Activated naive CD8-positive, alpha-beta T cell treated with anti-CD3 and anti-CD28 coated beads, Interleukin-2, amount 10 ng/mL, durations not matched to agents 7 days and 5 days (primary cell): ENCODE measurements at regions of chr11 and their contacts with region 1.

Region 1: GRCh38 chr11:96342961-96343711 is at the start of gene MAML2:
- DNase-seq: peak; percentile 82
- ATAC-seq: peak; percentile 80
- H3K4me3 Mint-ChIP-seq: peak within 1 kb of the TSS; percentile 96
- H3K27ac Mint-ChIP-seq: peak within 1 kb of the TSS; percentile 90
- H3K4me1 Mint-ChIP-seq: peaks cover 24% of the 10 kb centered on the region
- H3K27me3 Mint-ChIP-seq: no peaks in the 10 kb centered on the region
- total RNA-seq, gene MAML2: 18.6 to 20.5 TPM

Region 2: DNA sequence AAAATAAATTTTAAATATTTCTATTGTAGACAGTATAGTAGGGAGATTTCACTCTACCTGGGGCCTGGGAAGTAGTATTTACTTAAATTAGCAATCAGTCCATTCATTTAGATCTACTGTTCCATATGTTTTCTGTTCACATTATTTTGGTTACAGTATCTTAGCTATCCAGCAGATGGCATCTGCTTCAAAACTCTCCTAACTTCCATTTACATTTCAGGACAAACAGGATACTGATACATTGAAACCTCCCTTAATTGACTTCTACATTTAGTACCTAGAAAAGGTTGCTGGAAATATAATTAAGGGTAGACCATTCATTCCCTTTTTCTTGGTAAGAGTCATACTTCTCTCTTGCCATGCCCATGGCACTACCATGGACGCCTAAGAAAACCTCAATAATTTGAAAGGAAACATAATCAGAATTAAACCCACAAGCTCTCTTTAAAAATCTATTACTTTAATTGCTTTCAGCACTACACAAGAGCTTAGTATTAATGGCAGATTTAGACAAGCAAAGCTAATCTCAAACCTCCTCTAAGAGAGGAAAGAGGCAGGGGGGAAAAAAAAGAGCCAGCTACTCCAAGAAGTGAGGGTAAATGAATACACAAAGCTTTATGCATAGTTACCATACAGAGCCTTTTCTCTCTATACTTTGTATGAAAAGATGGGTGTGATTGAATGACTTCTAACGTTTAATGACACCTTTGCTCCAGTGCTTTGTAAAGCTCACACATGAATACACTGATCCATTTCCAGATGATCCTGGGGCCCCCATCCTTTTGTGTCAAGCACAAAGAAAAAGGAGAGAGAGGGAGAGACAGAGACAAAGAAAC is 288.0 kb before region 1 on chr11:
- POLR2A ChIA-PET with region 1: interaction called, 11 read pairs
- DNase-seq: no peak
- ATAC-seq: peak; percentile 30
- H3K4me3 Mint-ChIP-seq: no peak overlapping the region
- H3K27ac Mint-ChIP-seq: no peak overlapping the region
- H3K4me1 Mint-ChIP-seq: peaks cover 39% of the 10 kb centered on the region
- H3K27me3 Mint-ChIP-seq: no peaks in the 10 kb centered on the region

Region 3: DNA sequence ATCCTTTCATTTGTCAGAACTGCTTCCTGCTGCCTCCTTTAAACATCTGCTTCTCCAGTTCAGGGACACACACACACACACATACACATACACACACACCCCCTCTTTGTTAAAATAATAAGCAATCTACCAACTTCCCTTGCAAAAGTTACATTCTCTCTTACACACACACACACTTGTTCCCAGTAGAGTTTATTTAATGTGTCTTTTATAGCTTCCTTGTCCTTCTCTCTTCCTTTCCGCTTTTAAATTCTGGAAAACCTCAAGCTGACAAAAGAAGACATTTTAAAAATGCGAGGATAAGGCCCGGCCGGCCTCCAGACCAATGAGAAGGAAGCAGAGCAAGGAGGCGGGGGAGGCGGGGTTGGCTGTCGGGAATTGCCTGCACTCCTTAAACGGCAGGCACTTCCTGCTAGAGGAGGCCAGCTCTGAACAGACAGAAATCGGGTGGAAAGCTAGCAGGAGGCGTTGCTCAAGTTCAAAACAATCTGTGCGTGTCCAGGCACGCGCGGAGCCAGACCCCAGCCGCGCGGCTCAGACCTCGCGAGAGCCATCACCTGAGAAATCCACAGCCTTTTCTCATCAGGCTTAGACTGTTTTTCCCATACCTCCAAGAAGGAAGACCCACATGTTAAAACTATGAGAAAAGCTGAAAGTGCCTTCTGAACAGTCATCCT is 100.0 kb before region 1 on chr11:
- POLR2A ChIA-PET with region 1: interaction called, 48 read pairs
- DNase-seq: peak; percentile 71
- ATAC-seq: peak; percentile 88
- H3K4me3 Mint-ChIP-seq: peak overlapping the region; percentile 81
- H3K27ac Mint-ChIP-seq: peak overlapping the region; percentile 86
- H3K4me1 Mint-ChIP-seq: peaks cover 45% of the 10 kb centered on the region
- H3K27me3 Mint-ChIP-seq: no peaks in the 10 kb centered on the region

Region 4: DNA sequence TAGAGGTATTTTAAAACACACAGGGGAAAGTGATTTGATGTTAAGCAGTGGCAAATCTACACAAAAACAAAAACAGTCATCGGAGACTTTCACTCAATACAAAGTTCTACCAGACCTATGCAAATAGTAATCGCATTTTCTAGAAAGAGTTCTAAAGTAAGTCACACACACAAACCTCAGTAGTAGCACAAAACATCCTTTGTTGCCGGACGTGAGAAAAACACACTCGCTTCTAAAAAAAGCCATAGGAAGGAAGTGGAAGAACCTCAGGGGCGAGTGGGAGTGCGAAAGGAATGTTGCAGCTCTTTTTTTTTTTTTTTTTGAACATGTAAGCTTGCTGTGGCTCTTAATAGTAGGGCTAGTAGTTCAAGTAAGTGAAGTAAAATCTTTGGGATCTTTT is 89.0 kb before region 1 on chr11:
- POLR2A ChIA-PET with region 1: interaction called, 19 read pairs
- DNase-seq: no peak
- ATAC-seq: peak; percentile 24
- H3K4me3 Mint-ChIP-seq: peak overlapping the region; percentile 72
- H3K27ac Mint-ChIP-seq: peak overlapping the region; percentile 93
- H3K4me1 Mint-ChIP-seq: peaks cover 61% of the 10 kb centered on the region
- H3K27me3 Mint-ChIP-seq: no peaks in the 10 kb centered on the region

Region 5: GRCh38 chr11:96314326-96315020 is 28.7 kb before region 1 on chr11:
- POLR2A ChIA-PET with region 1: interaction called, 11 read pairs
- DNase-seq: no peak
- ATAC-seq: peak; percentile 65
- H3K4me3 Mint-ChIP-seq: peak overlapping the region; percentile 57
- H3K27ac Mint-ChIP-seq: peak overlapping the region; percentile 70
- H3K4me1 Mint-ChIP-seq: peaks cover 51% of the 10 kb centered on the region
- H3K27me3 Mint-ChIP-seq: no peaks in the 10 kb centered on the region

Region 6: DNA sequence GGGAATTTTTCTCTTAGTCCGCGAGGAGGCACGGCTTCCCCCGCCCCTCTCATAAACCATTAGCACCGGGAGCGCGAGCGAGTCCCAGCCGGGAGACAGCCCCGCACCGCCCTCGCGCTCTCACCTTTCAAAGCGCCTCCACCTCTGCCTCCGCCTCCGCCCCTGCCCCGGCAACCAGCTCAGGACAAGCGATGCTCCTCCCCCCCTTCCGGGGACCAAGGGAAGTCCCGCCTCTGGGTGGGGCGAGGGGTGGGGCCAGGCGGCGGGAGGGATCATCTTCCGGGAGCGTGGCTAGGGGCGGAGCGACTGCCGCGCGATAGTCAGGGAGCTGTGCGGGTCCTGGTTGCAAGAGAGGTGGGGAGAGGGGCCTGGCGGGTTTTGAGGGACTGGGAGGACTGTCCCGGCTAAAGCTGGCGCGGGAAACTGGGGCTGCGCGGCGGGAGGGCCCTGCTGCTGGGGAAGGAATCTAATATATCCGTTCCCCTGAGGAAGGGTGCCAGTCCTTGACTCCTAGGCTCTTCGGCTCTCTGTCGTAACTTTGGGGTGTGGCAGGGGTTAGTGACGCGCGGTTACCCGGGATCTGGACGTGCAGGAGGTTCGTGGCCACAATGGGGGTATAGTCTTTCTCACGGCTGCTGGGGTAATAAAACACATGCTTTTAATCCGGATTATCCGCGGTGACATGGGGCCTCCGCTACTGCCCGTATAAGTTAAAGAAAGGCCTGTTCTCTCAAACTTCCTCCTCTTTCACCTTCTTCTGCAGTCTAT is 46.8 kb after region 1 on chr11 and contains the starts of genes CCDC82 and JRKL:
- POLR2A ChIA-PET with region 1: interaction called, 17 read pairs
- DNase-seq: peak; percentile 98
- ATAC-seq: peak; percentile 91
- H3K4me3 Mint-ChIP-seq: peak within 1 kb of the TSS; percentile 88
- H3K27ac Mint-ChIP-seq: peak within 1 kb of the TSS; percentile 88
- H3K4me1 Mint-ChIP-seq: peaks cover 30% of the 10 kb centered on the region
- H3K27me3 Mint-ChIP-seq: no peaks in the 10 kb centered on the region
- total RNA-seq, gene CCDC82: 34.6 to 40.3 TPM
- total RNA-seq, gene JRKL: 12.7 to 14.1 TPM